IMR-90 (cell line): ENCODE measurements at regions of chr11 and their contacts with region 1.

Region 1: GRCh38 chr11:37830529-37830928 is 1232.5 kb upstream of the RAG2 start:
- DNase-seq: no peak
- ATAC-seq: no peak
- H3K4me3 ChIP-seq: no peak overlapping the region
- H3K27ac ChIP-seq: no peak overlapping the region
- H3K4me1 ChIP-seq: no peaks in the 10 kb centered on the region
- H3K27me3 ChIP-seq: no peaks in the 10 kb centered on the region
- CTCF ChIP-seq: no peak
- POLR2A ChIP-seq: no peak
- RAD21 ChIP-seq: no peak

Region 2: DNA sequence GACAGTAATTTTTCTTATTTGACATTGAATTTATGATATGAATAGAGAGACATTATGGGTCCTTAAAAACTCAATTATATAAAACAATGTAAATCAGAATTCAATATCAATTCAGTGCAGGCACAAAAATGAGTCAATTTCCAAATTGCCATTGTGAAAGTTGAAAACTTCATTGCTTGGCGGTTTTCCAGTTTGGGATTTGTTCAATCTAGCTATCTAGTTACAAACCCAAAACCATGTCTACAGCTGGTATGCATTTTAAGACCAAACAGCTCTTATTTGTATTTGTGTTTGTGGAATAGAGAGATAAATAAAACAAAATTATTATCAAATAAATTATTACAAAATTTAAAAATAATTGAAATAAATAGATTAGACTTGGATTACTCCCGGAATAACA is 25.9 kb before region 1 on chr11:
- CTCF ChIA-PET with region 1: no interaction called
- POLR2A ChIA-PET with region 1: no interaction called
- dilution Hi-C with region 1: no loop called
- in situ Hi-C with region 1: no loop called
- intact Hi-C with region 1: loop called (anchors 1 kb)
- DNase-seq: no peak
- ATAC-seq: no peak
- H3K4me3 ChIP-seq: no peak overlapping the region
- H3K27ac ChIP-seq: no peak overlapping the region
- H3K4me1 ChIP-seq: no peaks in the 10 kb centered on the region
- H3K27me3 ChIP-seq: no peaks in the 10 kb centered on the region
- CTCF ChIP-seq: no peak
- POLR2A ChIP-seq: no peak
- RAD21 ChIP-seq: no peak